Sigmoid colon (tissue), 7 donors: ENCODE measurements at regions of chr6 and their contacts with region 1.

Region 1: GRCh38 chr6:90296346-90297114 is at the start of gene BACH2:
- DNase-seq: peak; percentile 95
- H3K4me3 ChIP-seq: peak within 1 kb of the TSS; percentile 70 to 96 (median 86)
- H3K27ac ChIP-seq: peak within 1 kb of the TSS; percentile 80 to 94 (median 89)
- H3K4me1 ChIP-seq: peaks cover 0 to 28% (median 11%) of the 10 kb centered on the region in 4 donors
- H3K27me3 ChIP-seq: no peaks in the 10 kb centered on the region
- CTCF ChIP-seq: peak in 1 of 4 experiments; percentile 19
- EP300 ChIP-seq: no peak
- POLR2A ChIP-seq: no peak
- total RNA-seq, gene BACH2: 1.1 to 4.6 (median 2.1) TPM

Region 2: GRCh38 chr6:89956182-89956581 is 340.3 kb before region 1 on chr6:
- intact Hi-C with region 1: no loop called
- DNase-seq: no peak
- H3K4me3 ChIP-seq: no peak overlapping the region
- H3K27ac ChIP-seq: no peak overlapping the region
- H3K4me1 ChIP-seq: no peaks in the 10 kb centered on the region
- H3K27me3 ChIP-seq: no peaks in the 10 kb centered on the region
- CTCF ChIP-seq: no peak
- EP300 ChIP-seq: no peak
- POLR2A ChIP-seq: no peak

Region 3: DNA sequence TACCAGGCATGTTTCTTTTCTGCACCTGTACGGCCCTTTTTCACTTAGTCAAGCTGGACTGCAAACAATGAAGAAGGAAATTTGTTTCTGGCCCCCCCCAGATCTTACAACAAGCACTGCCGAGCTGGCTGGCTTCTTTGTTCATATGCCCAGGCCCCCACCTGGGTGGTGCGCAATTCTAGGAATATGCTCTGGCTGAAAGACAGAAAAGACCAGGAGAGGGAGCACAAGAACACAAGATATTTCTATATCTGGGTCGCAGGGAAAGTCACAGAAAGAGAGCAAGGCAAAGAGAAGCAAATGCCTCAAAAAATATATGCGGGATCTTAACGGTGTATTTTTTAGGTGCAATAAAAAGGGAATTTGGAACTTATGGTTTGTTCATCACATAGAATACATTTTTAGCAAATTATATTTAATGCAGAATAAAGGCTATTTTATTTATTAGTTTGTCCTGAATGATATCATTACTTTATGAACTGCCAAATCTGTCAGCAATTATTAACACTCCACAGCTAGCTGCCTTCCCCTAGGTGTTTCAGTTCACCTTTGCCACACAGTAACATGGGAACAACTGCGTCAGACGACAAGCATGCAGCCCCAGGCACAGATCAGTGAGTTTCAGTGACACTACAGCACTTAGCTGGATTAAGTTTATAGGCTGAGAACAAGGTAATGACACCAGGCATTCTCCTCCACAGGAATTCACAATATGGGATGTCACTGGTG is 325.8 kb before region 1 on chr6:
- intact Hi-C with region 1: loop called (anchors 2 kb)
- DNase-seq: no peak
- H3K4me3 ChIP-seq: no peak overlapping the region
- H3K27ac ChIP-seq: no peak overlapping the region
- H3K4me1 ChIP-seq: peaks cover 0 to 3% (median 0%) of the 10 kb centered on the region in 4 donors
- H3K27me3 ChIP-seq: no peaks in the 10 kb centered on the region
- CTCF ChIP-seq: peak; percentile 17 to 56 (median 56)
- EP300 ChIP-seq: no peak
- POLR2A ChIP-seq: no peak

Region 4: DNA sequence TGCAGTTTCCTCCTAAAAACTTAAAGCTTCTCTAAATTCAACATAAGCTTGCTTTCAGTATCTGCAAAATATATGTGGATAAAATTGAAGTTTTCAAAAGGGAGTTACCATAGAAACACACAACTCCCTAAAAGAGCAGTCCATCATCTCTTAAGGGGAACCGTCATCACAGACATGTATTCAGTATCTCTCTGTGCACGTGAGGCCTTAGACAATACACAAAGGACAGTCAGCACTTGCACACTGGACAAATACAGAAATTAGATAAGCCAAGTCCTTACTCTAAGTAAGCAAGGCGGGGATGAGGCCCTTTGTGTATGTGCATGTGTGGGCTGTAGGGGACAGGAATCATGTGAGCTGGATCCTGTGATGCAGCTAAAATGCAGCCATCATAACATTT is 136.5 kb before region 1 on chr6:
- intact Hi-C with region 1: no loop called
- DNase-seq: no peak
- H3K4me3 ChIP-seq: no peak overlapping the region
- H3K27ac ChIP-seq: peak overlapping the region in 1 of 4 donors; percentile 26
- H3K4me1 ChIP-seq: peaks cover 0 to 16% (median 6%) of the 10 kb centered on the region in 4 donors
- H3K27me3 ChIP-seq: no peaks in the 10 kb centered on the region
- CTCF ChIP-seq: no peak
- EP300 ChIP-seq: no peak
- POLR2A ChIP-seq: no peak

Region 5: GRCh38 chr6:90216072-90216977 is 80.2 kb before region 1 on chr6:
- intact Hi-C with region 1: loop called (anchors 2 kb)
- DNase-seq: no peak
- H3K4me3 ChIP-seq: no peak overlapping the region
- H3K27ac ChIP-seq: peak overlapping the region in 3 of 4 donors; percentile 7 to 90 (median 26)
- H3K4me1 ChIP-seq: peaks cover 0 to 33% (median 21%) of the 10 kb centered on the region in 4 donors
- H3K27me3 ChIP-seq: no peaks in the 10 kb centered on the region
- CTCF ChIP-seq: no peak
- EP300 ChIP-seq: no peak
- POLR2A ChIP-seq: no peak

Region 6: DNA sequence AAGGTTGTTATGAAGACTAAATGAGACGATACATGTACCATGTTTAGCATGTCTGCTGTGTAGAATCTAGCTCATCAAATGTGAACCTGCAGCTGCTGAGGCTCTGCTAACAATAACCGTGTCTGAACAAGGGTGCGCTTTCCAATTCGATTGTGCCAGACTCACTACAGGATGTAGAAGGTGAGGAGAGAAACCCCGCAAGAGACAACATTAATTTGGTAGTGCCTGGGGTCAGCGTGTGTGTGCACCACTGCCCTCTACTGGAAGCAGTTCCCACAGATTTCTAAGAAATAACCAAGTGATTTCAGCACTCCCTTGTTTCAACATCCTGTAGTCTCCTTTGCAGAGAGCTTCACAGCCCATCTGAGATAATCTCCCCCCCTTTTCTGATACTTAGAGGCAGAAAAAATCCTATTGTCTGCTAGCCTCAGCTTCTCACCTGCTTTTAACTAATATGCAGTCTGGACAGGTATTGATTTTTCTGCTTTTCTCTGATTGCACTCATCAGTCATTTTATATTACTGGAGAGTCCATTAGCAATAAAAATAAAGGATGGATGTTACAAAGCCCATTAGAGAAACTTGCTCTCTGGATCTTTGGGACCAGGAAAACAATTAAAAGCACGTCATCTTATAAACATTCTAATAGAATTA is 96.8 kb after region 1 on chr6:
- intact Hi-C with region 1: loop called (anchors 5 kb)
- DNase-seq: peak; percentile 71
- H3K4me3 ChIP-seq: no peak overlapping the region
- H3K27ac ChIP-seq: no peak overlapping the region
- H3K4me1 ChIP-seq: no peaks in the 10 kb centered on the region
- H3K27me3 ChIP-seq: no peaks in the 10 kb centered on the region
- CTCF ChIP-seq: peak; percentile 45 to 79 (median 59)
- EP300 ChIP-seq: no peak
- POLR2A ChIP-seq: no peak

Region 7: GRCh38 chr6:90586836-90587638 is 290.5 kb after region 1 on chr6 and contains the start of gene MAP3K7:
- intact Hi-C with region 1: loop called (anchors 10 kb)
- DNase-seq: peak; percentile 95
- H3K4me3 ChIP-seq: peak within 1 kb of the TSS; percentile 85 to 100 (median 92)
- H3K27ac ChIP-seq: peak within 1 kb of the TSS; percentile 88 to 92 (median 89)
- H3K4me1 ChIP-seq: peaks cover 0 to 39% (median 22%) of the 10 kb centered on the region in 4 donors
- H3K27me3 ChIP-seq: no peaks in the 10 kb centered on the region
- CTCF ChIP-seq: no peak
- EP300 ChIP-seq: no peak
- POLR2A ChIP-seq: peak; percentile 63 to 66
- total RNA-seq, gene MAP3K7: 21.2 to 25.3 (median 23.5) TPM